Left cardiac atrium (tissue), 4 donors: ENCODE measurements at regions of chrX and their contacts with region 1.

Region 1: DNA sequence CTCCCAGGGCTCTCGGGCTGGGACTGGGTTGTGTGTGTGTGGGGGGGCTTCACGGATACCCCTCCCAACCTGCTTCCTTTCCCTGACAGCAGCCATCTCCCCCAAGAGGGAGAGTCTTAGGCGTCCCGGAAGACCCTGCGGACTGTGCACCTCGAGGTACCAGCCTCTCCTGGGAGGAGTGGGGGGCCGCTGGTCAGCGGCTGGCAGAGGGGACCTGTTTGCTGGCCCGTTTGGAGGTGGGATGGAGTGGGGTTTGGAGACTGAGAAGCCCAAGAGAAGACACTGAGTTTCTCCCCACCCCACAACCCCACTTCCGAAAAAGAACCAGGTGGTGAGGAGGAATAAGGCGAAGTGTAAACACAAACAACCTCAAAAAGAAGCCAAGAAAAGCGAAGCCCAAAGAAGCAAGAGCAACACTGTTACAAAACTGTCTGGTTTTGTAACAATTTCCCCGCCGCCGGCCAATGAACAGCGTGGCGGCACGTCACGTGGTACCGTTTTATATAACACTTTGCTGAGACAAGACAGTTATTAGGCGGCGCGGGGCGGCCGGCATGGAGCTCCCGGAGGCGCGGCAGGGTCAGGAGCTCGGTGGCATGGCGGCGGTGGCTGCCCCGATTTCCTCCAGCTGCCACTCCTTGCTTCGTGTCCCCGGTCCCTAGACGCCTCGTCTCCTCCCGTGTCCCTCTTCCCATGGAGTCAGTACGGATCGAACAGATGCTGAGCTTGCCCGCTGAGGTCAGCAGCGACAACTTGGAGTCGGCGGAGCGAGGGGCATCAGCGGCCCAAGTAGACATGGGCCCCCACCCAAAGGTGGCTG is at the start of gene LONRF3:
- DNase-seq: peak; percentile 83
- ATAC-seq: peak; percentile 74 to 80
- total RNA-seq, gene LONRF3: 3.9 to 5.5 TPM

Region 2: DNA sequence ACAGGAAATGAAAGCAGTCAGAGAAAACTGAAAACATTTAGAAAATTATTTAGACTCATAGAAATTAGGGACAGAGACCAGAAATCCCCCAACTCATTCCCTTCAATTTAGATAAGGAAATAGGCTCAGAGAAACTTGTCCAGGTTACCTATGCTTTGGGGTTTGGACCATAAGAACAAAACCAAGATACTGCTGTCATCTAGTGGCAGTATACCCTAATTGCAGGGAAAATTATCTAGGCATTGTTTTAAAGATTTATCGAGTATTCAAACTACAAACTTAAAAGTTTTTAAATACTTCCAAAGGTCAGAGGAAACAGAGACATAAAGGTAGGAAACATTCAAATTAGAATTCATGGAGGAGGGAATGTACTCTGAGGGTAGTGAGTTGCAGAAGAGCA is 790.7 kb before region 1 on chrX:
- intact Hi-C with region 1: no loop called
- DNase-seq: no peak
- ATAC-seq: no peak

Region 3: DNA sequence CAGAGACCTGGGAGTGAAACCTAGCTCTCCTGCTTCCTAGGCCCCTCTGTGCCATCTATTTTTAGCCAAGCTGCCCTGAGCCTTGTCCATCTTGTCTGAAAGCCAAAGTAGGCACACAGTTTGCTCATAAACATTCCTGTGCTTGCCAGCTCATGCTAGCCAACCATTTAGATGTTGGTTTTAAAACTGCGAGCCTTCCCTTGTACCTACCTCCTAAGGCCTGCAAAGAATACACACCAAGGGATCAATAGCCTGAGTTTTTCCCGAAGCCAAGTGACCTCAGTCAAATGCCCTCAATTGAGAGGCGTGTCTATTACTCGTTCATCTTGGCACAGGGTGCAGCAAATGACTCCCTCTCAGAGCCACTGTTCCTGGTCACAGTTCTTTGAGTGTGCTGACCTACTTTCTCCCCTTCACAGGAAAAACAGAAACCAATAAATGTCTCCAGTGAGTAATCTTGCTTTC is 102.2 kb before region 1 on chrX:
- intact Hi-C with region 1: loop called in 1 of 2 experiments (anchors 2 kb)
- DNase-seq: no peak
- ATAC-seq: peak; percentile 87 to 92

Region 4: GRCh38 chrX:118948270-118948669 is 26.0 kb before region 1 on chrX:
- intact Hi-C with region 1: no loop called
- DNase-seq: no peak
- ATAC-seq: no peak

Region 5: GRCh38 chrX:119516157-119516702 is 541.9 kb after region 1 on chrX:
- intact Hi-C with region 1: no loop called
- DNase-seq: no peak
- ATAC-seq: peak; percentile 53 to 83